Activated CD4-positive, alpha-beta T cell treated with anti-CD3 and anti-CD28 coated beads, Interleukin-2, amount 10 ng/mL, durations not matched to agents 24 days and 14 days (primary cell): ENCODE measurements at regions of chr7 and their contacts with region 1.

Region 1: GRCh38 chr7:44581879-44582603 is at the start of gene TMED4:
- DNase-seq: peak; percentile 100
- H3K4me3 Mint-ChIP-seq: peak within 1 kb of the TSS; percentile 92
- H3K27ac Mint-ChIP-seq: peak within 1 kb of the TSS; percentile 92
- H3K4me1 Mint-ChIP-seq: peaks cover 35% of the 10 kb centered on the region
- H3K27me3 Mint-ChIP-seq: peaks cover 4% of the 10 kb centered on the region
- total RNA-seq, gene TMED4: 78.4 and 80.2 TPM in 2 replicates

Region 2: DNA sequence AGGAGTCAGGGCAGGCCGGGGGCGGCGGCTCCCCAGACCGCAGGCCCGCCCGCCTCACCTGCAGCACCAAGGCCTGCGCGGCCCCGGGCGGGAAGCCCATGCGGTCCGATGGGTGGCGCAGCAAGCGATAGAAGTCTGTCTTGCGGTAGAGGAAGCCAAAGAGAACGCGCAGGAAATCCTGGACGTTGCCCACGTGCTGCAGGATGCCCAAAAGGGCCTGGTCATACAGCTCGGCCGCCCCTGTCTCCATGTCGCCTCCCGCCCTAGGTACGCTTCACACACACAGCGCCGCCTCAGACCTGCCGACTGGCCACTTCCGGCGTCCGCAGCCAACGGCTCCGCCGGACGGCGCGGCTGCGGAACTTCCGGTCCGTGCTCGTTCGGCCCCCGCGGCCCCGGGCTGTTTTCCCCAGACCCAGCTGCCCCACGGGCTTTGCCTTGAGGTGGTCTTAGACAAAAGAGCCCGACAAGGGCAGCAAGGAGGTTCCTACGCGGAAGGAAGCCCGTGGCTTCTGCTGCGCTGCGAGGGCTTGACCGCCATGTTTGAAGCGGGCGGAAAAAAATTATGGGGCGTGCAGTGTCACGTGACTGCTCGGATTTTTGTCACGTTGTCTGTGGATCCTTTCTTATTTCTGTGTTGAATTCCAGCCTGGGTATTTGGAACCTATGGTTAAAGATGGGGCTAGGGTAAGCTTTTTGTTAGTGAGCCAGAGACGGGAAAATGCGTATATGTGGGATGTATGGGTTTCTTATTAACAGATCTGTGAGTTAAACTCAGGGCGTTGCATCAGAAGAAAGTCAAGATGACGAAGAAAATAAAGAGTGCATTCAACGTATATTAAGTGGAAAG is 91.5 kb before region 1 on chr7 and contains the start of gene NUDCD3:
- intact Hi-C with region 1: loop called (anchors 5 kb)
- DNase-seq: peak; percentile 95
- H3K4me3 Mint-ChIP-seq: peak within 1 kb of the TSS; percentile 85
- H3K27ac Mint-ChIP-seq: peak within 1 kb of the TSS; percentile 88
- H3K4me1 Mint-ChIP-seq: peaks cover 33% of the 10 kb centered on the region
- H3K27me3 Mint-ChIP-seq: no peaks in the 10 kb centered on the region
- total RNA-seq, gene NUDCD3: 88.8 and 92.7 TPM in 2 replicates

Region 3: DNA sequence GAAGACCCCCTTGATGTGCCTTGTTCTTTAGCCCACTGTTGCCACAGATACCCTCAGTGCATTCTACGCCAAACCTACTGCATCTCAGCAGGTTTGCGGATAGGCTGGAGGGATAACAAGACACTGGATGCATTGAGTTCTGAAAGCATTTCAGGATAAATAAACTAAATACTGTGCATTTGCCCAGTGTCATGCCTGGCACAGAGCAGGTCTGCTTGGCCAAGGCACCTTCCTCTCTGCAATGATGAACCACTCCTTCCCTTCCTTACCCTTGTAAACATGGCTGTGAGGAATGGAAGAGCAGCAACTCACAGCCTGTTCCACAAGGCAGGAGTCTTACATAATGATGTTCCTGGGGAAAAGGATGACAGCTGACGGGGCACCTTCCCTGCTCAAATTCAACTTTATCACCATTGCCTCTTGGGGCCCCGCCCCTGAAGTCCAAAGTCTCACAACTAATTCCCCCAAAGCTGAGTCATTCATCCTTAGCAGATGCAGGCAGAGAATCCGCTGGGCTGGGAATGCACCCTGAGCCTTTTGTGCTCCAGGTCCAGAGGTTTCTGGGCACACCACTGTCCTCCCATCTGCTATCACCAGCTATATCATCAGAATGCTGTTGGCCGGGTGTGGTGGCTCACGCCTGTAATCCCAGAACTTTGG is 19.9 kb before region 1 on chr7:
- intact Hi-C with region 1: no loop called
- DNase-seq: no peak
- H3K4me3 Mint-ChIP-seq: no peak overlapping the region
- H3K27ac Mint-ChIP-seq: no peak overlapping the region
- H3K4me1 Mint-ChIP-seq: no peaks in the 10 kb centered on the region
- H3K27me3 Mint-ChIP-seq: peaks cover 2% of the 10 kb centered on the region

Region 4: GRCh38 chr7:44748045-44748947 is 166.3 kb after region 1 on chr7 and contains the start of gene ZMIZ2:
- intact Hi-C with region 1: loop called (anchors 1 kb)
- DNase-seq: peak; percentile 97
- H3K4me3 Mint-ChIP-seq: peak within 1 kb of the TSS; percentile 93
- H3K27ac Mint-ChIP-seq: peak within 1 kb of the TSS; percentile 89
- H3K4me1 Mint-ChIP-seq: peaks cover 33% of the 10 kb centered on the region
- H3K27me3 Mint-ChIP-seq: no peaks in the 10 kb centered on the region
- total RNA-seq, gene ZMIZ2: 130 and 133 TPM in 2 replicates

Region 5: DNA sequence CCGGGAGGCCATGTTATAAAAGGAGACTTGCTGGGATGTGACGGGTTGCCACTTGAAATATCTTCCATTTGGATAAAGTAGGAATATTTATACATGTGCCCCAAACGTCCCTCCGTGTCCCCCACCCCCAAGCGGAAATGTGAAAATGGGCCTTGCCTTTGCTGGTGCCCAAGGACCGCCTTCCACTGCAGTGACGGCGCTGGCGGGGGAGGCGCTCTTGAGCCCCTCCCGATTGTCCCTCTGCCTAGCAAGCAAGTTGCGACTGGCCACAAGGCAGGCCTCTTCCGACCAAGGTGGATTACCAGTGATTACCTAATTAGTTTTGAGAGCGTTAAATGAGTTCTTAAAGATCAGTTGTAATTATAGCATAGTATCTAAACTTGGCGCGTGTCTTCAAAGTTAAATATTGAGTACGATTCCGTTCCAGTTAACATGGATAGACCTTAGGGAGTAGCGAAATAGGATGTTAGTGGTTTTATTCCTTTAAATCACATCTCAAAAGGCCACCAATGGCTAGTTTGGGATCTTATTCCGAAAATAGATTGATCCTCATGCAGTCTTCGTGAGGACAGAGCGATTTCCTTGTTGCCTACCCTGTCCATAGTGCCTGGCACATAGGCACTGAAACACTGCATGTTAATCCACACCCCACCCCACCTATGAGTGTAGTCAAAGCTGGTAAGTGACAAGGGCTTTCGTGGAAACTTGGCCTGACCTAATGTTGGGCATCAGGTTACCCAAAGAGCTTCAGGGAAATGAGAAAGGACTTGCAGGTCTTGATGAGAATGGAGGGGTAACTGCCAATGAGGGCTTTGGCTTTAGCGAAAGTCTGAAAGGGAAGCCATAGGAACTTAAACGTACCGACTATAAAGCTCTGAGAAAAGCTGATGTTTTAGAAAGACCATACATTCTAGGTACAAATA is 215.5 kb after region 1 on chr7:
- intact Hi-C with region 1: loop called (anchors 1 kb)
- DNase-seq: peak; percentile 95
- H3K4me3 Mint-ChIP-seq: peak overlapping the region; percentile 98
- H3K27ac Mint-ChIP-seq: peak overlapping the region; percentile 97
- H3K4me1 Mint-ChIP-seq: peaks cover 31% of the 10 kb centered on the region
- H3K27me3 Mint-ChIP-seq: no peaks in the 10 kb centered on the region

Region 6: GRCh38 chr7:44980393-44981034 is 398.5 kb after region 1 on chr7:
- intact Hi-C with region 1: loop called (anchors 2 kb)
- DNase-seq: peak; percentile 89
- H3K4me3 Mint-ChIP-seq: peak overlapping the region; percentile 93
- H3K27ac Mint-ChIP-seq: peak overlapping the region; percentile 90
- H3K4me1 Mint-ChIP-seq: peaks cover 63% of the 10 kb centered on the region
- H3K27me3 Mint-ChIP-seq: no peaks in the 10 kb centered on the region